Activated CD4-positive, alpha-beta T cell treated with anti-CD3 and anti-CD28 coated beads, Interleukin-2, amount 10 ng/mL, durations not matched to agents 7 days and 5 days (primary cell): ENCODE measurements at regions of chr1 and their contacts with region 1.

Region 1: DNA sequence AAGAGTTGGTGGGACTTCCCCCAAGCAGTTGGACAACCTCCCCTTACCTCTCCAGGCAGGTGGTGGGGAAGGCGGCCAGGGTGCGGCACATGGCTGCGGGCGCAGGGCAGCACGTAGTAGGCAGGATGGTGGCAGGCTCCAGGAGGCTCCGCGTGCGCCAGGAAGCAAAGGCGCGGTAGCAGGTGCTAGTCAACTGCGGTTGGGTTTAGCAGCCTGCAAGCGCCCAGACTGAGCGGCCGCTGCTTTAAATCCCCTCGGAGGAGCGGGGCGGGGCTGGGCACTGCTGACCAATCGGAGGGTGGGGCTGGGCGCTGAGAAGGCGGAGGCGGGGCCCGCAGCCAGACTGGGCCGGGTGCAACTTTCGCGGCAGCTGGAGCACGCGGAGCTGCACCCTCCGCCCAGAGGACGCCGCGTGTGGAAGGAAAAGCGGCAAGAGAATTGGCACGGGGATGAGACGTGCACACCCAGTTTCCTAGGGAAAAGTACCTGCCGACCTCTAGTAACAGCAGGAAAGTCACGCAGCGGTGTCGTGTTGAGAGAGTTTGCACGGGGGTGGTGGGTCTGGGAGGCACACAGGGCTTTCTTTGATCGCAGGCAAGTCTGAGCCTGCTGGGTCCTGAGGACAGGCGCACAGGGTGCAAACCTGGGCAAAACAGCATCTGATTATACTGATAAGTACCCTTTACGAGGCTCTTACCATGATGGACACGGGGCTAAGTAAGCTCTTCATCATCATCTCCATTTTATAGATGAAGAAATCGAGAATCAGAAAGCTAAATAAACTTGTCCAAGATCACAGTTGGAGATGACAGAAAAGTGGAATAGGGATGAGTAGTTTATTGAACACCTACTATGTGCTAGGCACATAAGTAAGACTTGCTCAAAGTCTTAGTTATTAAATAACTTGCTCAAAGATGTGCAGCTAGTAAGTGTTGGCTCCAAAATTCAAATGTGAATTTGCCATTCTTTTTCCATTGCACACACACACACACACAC is at the start of gene RGS16:
- DNase-seq: peak; percentile 90
- H3K4me3 Mint-ChIP-seq: peak within 1 kb of the TSS; percentile 73
- H3K27ac Mint-ChIP-seq: peak within 1 kb of the TSS; percentile 81
- H3K4me1 Mint-ChIP-seq: peaks cover 18% of the 10 kb centered on the region
- H3K27me3 Mint-ChIP-seq: peaks cover 47% of the 10 kb centered on the region
- total RNA-seq, gene RGS16: 1.9 to 2.0 TPM

Region 2: GRCh38 chr1:182575539-182576149 is 28.8 kb before region 1 on chr1:
- CTCF ChIA-PET with region 1: no interaction called
- POLR2A ChIA-PET with region 1: no interaction called
- DNase-seq: no peak
- H3K4me3 Mint-ChIP-seq: no peak overlapping the region
- H3K27ac Mint-ChIP-seq: no peak overlapping the region
- H3K4me1 Mint-ChIP-seq: no peaks in the 10 kb centered on the region
- H3K27me3 Mint-ChIP-seq: no peaks in the 10 kb centered on the region

Region 3: GRCh38 chr1:182588500-182589452 is 15.7 kb before region 1 on chr1 and contains the start of gene RNASEL:
- CTCF ChIA-PET with region 1: interaction called, 24 read pairs
- POLR2A ChIA-PET with region 1: interaction called, 3 read pairs
- DNase-seq: peak; percentile 62
- H3K4me3 Mint-ChIP-seq: peak within 1 kb of the TSS; percentile 91
- H3K27ac Mint-ChIP-seq: peak within 1 kb of the TSS; percentile 99
- H3K4me1 Mint-ChIP-seq: peaks cover 31% of the 10 kb centered on the region
- H3K27me3 Mint-ChIP-seq: peaks cover 12% of the 10 kb centered on the region
- total RNA-seq, gene RNASEL: 6.7 to 7.3 TPM

Region 4: DNA sequence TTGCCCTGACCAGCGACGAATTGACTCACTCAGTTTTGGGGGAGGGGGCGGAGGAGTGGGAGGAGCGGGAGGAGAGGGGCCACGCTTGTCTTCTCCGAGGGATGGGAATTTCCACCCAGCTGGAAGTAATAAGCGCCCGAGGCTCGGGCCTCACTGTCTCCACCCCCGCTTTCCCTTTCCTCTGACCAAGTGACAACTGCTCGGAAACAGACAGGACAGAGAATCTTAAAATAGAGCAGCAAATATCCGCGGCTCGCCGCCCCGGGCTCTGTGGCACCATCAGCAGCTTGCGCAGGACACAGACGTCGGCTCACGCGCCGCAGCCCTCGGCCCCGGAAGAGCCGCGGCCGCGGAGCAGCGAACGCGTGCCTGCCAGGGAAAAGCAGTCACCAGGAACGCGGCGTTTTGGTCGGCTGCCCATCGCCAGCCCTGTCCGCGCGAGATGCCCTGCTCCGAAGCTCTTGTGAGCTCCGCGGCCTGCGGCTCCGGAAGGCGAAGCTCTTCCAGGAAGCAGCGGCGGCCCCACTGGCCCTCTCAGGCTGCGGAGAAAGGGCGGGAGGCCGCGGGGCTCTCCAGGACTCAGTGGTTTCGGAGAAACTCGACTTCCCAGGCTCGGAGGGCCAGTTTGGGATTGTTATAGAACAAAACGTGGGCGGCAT is 10.5 kb after region 1 on chr1:
- CTCF ChIA-PET with region 1: interaction called, 10 read pairs
- POLR2A ChIA-PET with region 1: interaction called, 5 read pairs
- DNase-seq: peak; percentile 16
- H3K4me3 Mint-ChIP-seq: peak overlapping the region; percentile 57
- H3K27ac Mint-ChIP-seq: no peak overlapping the region
- H3K4me1 Mint-ChIP-seq: peaks cover 40% of the 10 kb centered on the region
- H3K27me3 Mint-ChIP-seq: peaks cover 82% of the 10 kb centered on the region

Region 5: DNA sequence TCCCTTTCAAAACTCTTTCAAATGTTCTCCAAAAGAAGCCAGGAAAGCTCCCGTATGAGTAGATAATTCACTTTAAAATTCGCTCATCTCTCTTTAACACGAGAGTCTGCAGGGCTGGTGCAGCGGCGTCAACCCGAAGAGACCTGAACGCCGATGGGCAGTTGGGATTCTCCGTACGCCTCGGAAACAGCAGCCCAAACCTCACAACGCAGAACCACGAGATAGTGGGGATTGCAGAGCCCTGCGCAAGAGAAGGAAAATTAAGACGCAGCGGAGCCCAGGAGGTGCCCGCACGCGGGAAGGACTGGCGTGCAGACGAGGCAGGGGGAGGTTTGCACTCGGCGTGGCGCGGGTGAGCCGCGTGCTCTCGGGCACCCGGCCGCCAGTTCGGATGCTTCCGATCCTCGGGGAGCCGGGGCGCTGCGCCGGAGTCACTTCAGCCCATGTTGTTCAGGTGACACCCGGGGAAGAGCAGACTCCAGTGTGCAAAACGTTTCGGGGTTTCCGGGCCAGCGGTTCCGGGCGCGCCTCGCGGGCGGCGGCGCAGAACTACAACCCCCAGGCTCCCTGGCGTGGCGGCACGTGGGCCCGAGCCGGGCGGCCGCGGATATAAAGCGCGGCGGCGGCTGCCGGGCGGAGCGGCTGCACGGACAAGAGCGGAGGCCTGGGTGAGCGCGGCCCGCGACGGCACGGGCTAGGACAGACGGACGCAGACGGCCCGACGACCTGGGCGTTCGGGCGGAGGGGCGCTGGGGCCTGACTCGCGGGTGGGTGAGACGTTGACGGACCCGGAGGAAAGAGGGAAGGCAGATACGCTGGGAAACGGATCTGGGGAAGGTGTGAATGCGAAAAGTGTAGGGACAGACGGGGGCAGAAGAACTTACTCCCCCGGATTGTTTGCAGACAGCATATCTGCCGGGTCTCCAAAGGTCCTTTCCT is 184.9 kb after region 1 on chr1 and contains the start of gene NPL:
- CTCF ChIA-PET with region 1: interaction called, 238 read pairs
- POLR2A ChIA-PET with region 1: no interaction called
- DNase-seq: peak; percentile 87
- H3K4me3 Mint-ChIP-seq: peak within 1 kb of the TSS; percentile 84
- H3K27ac Mint-ChIP-seq: peak within 1 kb of the TSS; percentile 83
- H3K4me1 Mint-ChIP-seq: peaks cover 13% of the 10 kb centered on the region
- H3K27me3 Mint-ChIP-seq: peaks cover 47% of the 10 kb centered on the region
- total RNA-seq, gene NPL: 2.7 to 3.1 TPM